GM12878 (cell line): ENCODE measurements at regions of chr3 and their contacts with region 1.

Region 1: DNA sequence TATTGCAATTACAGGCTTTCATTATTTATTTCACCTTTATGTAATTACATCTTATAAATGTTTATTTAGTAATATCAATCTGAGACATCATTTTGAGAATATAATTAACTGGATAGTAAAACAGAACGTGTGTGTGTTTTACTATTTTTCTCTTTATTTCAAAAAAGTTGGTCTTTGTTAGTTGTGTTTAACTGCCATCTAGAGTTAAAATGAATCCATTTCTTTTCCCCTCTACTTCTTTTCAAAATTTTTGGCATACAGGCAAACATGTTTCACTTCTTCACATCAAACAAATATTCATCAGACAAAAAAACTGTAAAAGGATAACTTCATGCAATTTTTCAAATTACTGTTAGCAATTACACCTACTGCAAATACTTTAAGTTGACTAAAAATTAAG is 61.1 kb downstream of the FEZF2 start:
- DNase-seq: no peak
- ATAC-seq: no peak
- H3K4me3 ChIP-seq: no peak overlapping the region
- H3K27ac ChIP-seq: no peak overlapping the region
- H3K4me1 ChIP-seq: no peaks in the 10 kb centered on the region
- H3K27me3 ChIP-seq: no peaks in the 10 kb centered on the region
- CTCF ChIP-seq: no peak; a peak in 1 of 6 replicates
- EP300 ChIP-seq: no peak
- POLR2A ChIP-seq: no peak
- RAD21 ChIP-seq: no peak

Region 2: DNA sequence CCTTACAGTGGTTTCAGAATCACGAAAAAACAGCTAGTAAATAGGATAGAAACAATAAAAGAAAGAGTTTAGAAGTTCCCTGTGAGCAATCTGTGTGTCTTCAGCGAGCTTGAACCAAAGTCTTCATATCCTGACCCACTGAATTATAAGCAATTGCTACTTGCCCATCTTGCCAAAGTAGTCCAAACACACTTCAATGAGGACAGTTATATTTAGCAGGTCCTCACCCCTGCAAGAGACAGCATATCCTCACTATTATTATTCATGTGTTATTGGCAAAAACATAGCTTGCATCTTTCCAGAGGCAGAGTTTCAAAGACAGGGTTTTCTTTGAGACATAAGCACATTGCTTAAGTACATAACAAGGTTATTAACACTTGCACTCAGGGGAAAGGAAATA is 16.6 kb before region 1 on chr3:
- CTCF ChIA-PET with region 1: interaction called, 16 read pairs
- POLR2A ChIA-PET with region 1: no interaction called
- RAD21 ChIA-PET with region 1: no interaction called
- SMC1A ChIA-PET with region 1: interaction called, 6 read pairs
- in situ Hi-C with region 1: no loop called
- intact Hi-C with region 1: no loop called
- DNase-seq: no peak
- ATAC-seq: no peak
- H3K4me3 ChIP-seq: no peak overlapping the region
- H3K27ac ChIP-seq: no peak overlapping the region
- H3K4me1 ChIP-seq: no peaks in the 10 kb centered on the region
- H3K27me3 ChIP-seq: no peaks in the 10 kb centered on the region
- CTCF ChIP-seq: no peak
- EP300 ChIP-seq: no peak
- POLR2A ChIP-seq: no peak
- RAD21 ChIP-seq: no peak